ENCODE measurements at regions of chr2 and their contacts with region 1.

Region 1: GRCh38 chr2:31333527-31334183 is 80.9 kb downstream of the XDH start:
- DNase-seq: peak; percentile 87

Region 2: GRCh38 chr2:30736461-30737325 is 597.0 kb before region 1 on chr2:
- in situ Hi-C with region 1: loop called (anchors 25 kb)
- DNase-seq: no peak

Region 3: DNA sequence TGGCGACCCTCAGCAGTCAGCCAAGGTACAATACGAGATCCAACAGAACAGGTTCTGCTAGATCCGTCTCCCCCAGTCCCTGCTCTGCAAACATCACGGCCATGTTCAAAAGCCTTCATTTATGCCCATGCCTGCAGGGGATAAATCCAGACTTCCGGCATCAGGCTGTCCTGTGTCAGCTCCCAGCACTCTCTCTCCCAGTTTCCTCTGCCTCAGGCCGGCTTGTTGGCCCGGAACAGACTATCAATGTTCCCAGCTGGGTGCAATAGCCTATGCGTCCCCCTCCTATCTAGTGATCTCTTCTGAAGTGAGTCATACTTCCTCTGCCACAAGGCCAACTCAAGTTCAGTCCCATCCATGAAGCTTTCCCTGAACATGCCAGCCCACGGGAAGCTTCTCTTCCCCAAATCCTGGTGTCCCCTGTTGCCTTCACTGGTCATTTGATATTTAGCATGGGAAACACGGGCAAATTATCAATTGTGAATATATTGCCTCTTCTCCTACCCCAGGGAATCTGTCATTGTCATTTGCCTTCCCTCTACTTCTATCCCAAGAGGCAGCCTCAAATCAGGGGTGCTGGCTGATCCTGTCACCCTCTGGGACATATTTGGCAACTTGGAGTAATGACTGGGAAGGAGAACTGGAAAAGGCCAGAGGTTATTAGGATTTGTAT is 577.5 kb before region 1 on chr2:
- in situ Hi-C with region 1: no loop called
- DNase-seq: no peak

Region 4: GRCh38 chr2:31287654-31288053 is 46.0 kb before region 1 on chr2:
- in situ Hi-C with region 1: no loop called
- DNase-seq: no peak

Region 5: DNA sequence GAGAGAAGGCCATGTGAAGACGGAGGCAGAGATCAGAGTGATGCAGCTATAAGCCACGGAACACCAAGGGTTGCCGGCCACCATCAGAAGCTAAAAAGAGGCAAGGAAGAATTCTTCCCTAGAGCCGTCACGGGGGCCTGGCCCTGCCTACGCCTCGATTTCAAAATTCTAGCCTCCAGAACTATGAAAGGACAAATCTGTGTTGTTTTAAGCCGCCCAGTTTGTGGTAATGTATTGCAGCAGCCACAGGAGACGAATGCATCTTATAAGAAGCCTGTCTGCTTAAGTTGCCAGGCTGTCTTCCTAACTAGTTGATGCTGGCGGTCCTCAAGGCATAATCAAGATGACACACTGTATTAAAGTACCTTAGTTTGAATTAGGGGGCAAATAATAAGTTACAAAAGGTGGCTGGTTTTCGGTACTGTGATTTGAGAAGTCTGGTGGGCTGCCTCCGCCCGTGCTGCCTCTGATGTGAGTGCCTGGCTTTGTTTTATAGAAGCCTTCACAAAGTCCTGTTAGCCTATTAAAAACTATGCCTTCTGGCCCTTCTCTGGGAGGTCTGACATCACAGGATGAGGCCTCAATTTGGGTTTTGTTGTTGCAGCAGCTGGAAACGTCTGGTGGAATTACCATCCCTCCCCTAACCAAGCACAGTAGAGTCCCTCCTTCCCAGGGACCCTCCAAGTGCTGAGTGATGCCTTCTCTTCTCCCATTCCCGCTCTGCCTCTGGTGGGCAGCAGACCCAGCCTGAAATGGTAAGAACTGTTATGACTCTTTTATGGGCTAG is 193.5 kb after region 1 on chr2:
- in situ Hi-C with region 1: no loop called
- DNase-seq: no peak